MCF 10A (cell line): ENCODE measurements at regions of chr7 and their contacts with region 1.

Region 1: GRCh38 chr7:66952343-66953043 is 31.5 kb downstream of the TMEM248 start:
- DNase-seq: peak; percentile 70
- H3K4me3 Mint-ChIP-seq: no peak overlapping the region
- H3K27ac Mint-ChIP-seq: peak overlapping the region; percentile 40
- H3K4me1 Mint-ChIP-seq: peaks cover 30% of the 10 kb centered on the region
- H3K27me3 Mint-ChIP-seq: no peaks in the 10 kb centered on the region
- CTCF ChIP-seq: no peak

Region 2: DNA sequence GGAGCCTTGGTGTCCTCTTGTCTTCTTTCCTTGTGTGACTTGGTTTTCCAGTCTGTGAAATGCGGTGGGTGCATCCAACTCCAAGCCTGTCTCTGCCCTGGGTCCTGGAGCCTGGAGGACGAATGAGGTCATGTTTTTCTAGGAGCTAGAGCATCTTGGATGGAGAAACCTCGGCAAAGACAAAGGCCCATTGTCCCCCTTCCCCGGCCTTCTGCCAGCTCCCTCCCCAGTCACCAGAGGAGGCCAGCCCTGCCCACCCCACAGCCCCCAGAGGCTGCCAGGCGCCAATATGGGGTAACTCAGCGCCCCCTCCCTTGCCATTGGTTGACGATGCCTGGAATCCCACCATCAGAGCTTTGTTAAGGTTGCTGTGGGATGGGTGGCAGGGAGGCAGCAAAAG is 283.4 kb before region 1 on chr7:
- CTCF ChIA-PET with region 1: no interaction called
- POLR2A ChIA-PET with region 1: no interaction called
- intact Hi-C with region 1: no loop called
- DNase-seq: no peak
- H3K4me3 Mint-ChIP-seq: no peak overlapping the region
- H3K27ac Mint-ChIP-seq: no peak overlapping the region
- H3K4me1 Mint-ChIP-seq: no peaks in the 10 kb centered on the region
- H3K27me3 Mint-ChIP-seq: no peaks in the 10 kb centered on the region
- CTCF ChIP-seq: no peak

Region 3: DNA sequence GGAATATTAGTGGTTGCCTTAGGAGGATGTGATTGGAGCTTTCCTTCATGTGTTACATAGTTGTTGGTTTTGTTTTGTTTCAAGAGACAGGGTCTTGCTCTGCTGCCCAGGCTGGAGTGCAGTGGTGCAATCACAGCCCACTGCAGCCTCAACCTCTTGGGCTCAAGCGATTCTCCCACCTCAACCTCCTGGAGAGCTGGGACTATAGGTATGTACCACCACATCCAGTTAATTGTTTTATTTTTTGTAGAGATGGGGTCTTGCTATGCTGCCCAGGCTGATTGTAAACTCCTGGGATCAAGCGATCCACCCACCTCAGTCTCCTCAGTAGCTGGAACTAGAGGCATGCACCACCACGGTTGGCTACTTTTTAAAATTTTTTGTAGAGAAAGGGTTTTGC is 125.8 kb before region 1 on chr7:
- CTCF ChIA-PET with region 1: no interaction called
- POLR2A ChIA-PET with region 1: no interaction called
- intact Hi-C with region 1: no loop called
- DNase-seq: no peak
- H3K4me3 Mint-ChIP-seq: no peak overlapping the region
- H3K27ac Mint-ChIP-seq: no peak overlapping the region
- H3K4me1 Mint-ChIP-seq: peaks cover 6% of the 10 kb centered on the region
- H3K27me3 Mint-ChIP-seq: no peaks in the 10 kb centered on the region
- CTCF ChIP-seq: no peak

Region 4: DNA sequence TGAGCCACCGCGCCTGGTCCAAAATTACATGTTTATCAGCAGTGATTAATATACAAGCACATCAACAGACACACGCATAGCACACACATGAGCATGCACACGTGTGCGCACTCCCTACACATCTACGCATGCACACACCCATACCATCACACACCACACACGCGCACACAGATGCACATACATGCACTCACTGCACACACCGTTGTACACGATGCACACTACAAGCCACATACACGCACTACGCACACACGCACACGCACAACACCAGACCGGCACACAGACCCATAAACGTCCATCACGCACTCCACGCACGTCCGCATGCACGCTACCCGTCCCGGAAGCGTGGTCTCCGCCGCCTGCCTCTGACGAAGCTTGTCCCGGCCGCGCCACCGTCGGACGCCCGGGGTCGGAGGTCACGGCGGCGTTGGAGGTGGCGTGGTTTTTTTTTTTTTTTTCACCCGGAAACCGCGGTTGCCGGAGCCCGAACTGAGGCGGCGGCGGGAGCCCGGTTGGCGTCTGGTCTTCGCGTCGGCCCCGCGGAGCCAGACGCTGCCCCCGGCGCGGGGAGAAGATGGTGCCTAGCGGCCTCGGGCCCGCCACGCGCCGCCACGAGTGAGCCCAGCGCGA is 31.6 kb before region 1 on chr7 and contains the start of gene TMEM248:
- CTCF ChIA-PET with region 1: interaction called, 4 read pairs
- POLR2A ChIA-PET with region 1: interaction called, 11 read pairs
- intact Hi-C with region 1: no loop called
- DNase-seq: peak; percentile 82
- H3K4me3 Mint-ChIP-seq: peak within 1 kb of the TSS; percentile 85
- H3K27ac Mint-ChIP-seq: peak within 1 kb of the TSS; percentile 66
- H3K4me1 Mint-ChIP-seq: peaks cover 8% of the 10 kb centered on the region
- H3K27me3 Mint-ChIP-seq: no peaks in the 10 kb centered on the region
- CTCF ChIP-seq: no peak
- total RNA-seq, gene TMEM248: 75.7 and 80.0 TPM in 2 replicates

Region 5: GRCh38 chr7:67823345-67823744 is 870.9 kb after region 1 on chr7:
- CTCF ChIA-PET with region 1: no interaction called
- POLR2A ChIA-PET with region 1: no interaction called
- intact Hi-C with region 1: no loop called
- DNase-seq: no peak
- H3K4me3 Mint-ChIP-seq: no peak overlapping the region
- H3K27ac Mint-ChIP-seq: no peak overlapping the region
- H3K4me1 Mint-ChIP-seq: no peaks in the 10 kb centered on the region
- H3K27me3 Mint-ChIP-seq: no peaks in the 10 kb centered on the region
- CTCF ChIP-seq: no peak